GM12878 (cell line): ENCODE measurements at regions of chr5 and their contacts with region 1.

Region 1: DNA sequence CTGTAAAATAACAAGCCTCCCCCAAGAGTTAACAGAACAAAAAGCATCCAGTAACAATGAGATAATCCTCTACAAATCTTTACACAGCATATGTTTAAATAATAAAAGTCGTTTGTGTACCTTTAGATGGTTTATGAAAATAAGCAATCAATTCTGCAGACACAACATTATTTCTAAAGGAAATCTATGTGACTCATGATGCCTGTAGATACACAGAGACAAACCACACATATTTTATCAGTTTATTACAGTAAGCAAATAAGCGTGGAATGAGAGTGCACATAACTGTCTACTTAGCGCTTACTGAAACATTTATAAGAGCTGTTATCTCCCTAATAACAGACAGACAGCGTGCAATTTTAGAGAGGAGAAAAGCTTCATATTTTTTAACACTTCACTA is 243.6 kb downstream of the AP3B1 start:
- DNase-seq: no peak
- ATAC-seq: no peak
- H3K4me3 ChIP-seq: no peak overlapping the region
- H3K27ac ChIP-seq: no peak overlapping the region
- H3K4me1 ChIP-seq: no peaks in the 10 kb centered on the region
- H3K27me3 ChIP-seq: no peaks in the 10 kb centered on the region
- CTCF ChIP-seq: no peak
- EP300 ChIP-seq: no peak
- POLR2A ChIP-seq: no peak
- RAD21 ChIP-seq: no peak

Region 2: DNA sequence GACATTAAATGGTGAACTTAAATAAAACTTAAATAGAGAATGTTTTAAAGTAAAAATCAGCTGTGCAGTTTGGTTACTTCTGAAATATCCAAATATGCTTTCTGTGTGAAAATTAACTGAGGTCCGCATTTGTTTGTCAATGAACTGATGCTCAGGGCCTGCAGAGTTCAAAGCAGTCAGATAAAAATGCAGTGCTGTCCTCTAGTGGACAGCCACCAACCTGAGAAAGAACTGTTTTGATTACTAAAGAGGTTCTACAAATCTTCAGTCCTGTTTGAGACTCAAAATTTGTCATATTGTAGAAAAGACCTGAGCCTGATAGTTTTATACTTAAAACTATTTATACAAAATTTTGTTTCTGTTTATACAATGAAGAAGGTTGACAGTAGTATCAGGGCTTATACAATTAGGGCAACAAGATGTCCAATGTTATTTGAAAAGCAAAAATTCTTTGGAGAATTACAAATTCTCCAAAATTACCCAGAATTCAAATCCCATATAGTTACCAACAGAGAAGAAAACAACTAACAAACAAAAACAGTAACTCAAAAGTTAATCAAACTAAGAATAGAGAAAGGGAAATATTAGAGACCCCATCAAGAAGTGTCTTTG is 42.4 kb before region 1 on chr5:
- CTCF ChIA-PET with region 1: no interaction called
- POLR2A ChIA-PET with region 1: no interaction called
- RAD21 ChIA-PET with region 1: no interaction called
- SMC1A ChIA-PET with region 1: no interaction called
- in situ Hi-C with region 1: no loop called
- intact Hi-C with region 1: no loop called
- DNase-seq: no peak
- ATAC-seq: peak; percentile 84
- H3K4me3 ChIP-seq: no peak overlapping the region
- H3K27ac ChIP-seq: no peak overlapping the region
- H3K4me1 ChIP-seq: peaks cover 3% of the 10 kb centered on the region; the same call in 1 of the 2 replicates
- H3K27me3 ChIP-seq: no peaks in the 10 kb centered on the region
- CTCF ChIP-seq: peak; percentile 77 to 83 (median 79)
- EP300 ChIP-seq: no peak
- POLR2A ChIP-seq: no peak
- RAD21 ChIP-seq: peak; percentile 89

Region 3: DNA sequence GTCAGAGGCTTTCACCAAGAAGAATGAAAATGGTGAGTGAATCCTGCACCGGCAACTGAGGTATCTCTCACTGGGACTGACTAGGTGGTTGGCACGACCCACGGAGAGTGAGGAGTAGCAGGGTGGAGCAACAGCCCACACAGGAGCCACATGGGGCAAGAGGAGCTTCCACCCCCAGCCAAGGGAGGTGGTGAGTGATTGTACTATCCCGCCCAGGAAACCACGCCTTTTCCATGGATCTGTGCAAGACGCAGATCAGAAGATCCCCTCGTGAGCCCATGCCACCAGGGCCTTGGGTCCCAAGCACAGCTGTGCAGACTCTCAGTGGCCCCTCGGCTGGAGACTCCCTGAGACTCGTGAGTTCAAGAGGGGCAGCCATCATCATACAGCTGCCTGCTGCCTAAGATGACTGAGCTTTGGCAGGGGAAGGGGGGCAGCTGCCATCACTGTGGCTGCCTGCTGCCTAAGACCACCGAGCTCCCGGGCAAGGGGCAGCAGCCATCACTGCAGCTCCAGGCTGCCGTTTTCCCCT is 14.1 kb after region 1 on chr5:
- CTCF ChIA-PET with region 1: interaction called, 3 read pairs
- POLR2A ChIA-PET with region 1: no interaction called
- RAD21 ChIA-PET with region 1: no interaction called
- SMC1A ChIA-PET with region 1: interaction called, 22 read pairs
- in situ Hi-C with region 1: no loop called
- intact Hi-C with region 1: no loop called
- DNase-seq: no peak
- ATAC-seq: no peak
- H3K4me3 ChIP-seq: no peak overlapping the region
- H3K27ac ChIP-seq: no peak overlapping the region
- H3K4me1 ChIP-seq: no peaks in the 10 kb centered on the region
- H3K27me3 ChIP-seq: no peaks in the 10 kb centered on the region
- CTCF ChIP-seq: no peak
- EP300 ChIP-seq: no peak
- POLR2A ChIP-seq: no peak
- RAD21 ChIP-seq: no peak